Adrenal gland (tissue), 19 donors: ENCODE measurements at regions of chr6 and their contacts with region 1.

Region 1: GRCh38 chr6:83615025-83615999 is 93.6 kb downstream of the SNAP91 start:
- DNase-seq: peak in 1 of 7 donors; percentile 9
- H3K4me3 ChIP-seq: no peak overlapping the region
- H3K27ac ChIP-seq: no peak overlapping the region
- H3K4me1 ChIP-seq: no peaks in the 10 kb centered on the region
- H3K27me3 ChIP-seq: peaks cover 6% of the 10 kb centered on the region
- CTCF ChIP-seq: peak; percentile 41 to 63 (median 48)
- POLR2A ChIP-seq: no peak

Region 2: GRCh38 chr6:83019741-83020140 is 595.6 kb before region 1 on chr6:
- intact Hi-C with region 1: no loop called
- DNase-seq: no peak
- H3K4me3 ChIP-seq: no peak overlapping the region
- H3K27ac ChIP-seq: no peak overlapping the region
- H3K4me1 ChIP-seq: no peaks in the 10 kb centered on the region
- H3K27me3 ChIP-seq: no peaks in the 10 kb centered on the region
- CTCF ChIP-seq: no peak
- POLR2A ChIP-seq: no peak

Region 3: DNA sequence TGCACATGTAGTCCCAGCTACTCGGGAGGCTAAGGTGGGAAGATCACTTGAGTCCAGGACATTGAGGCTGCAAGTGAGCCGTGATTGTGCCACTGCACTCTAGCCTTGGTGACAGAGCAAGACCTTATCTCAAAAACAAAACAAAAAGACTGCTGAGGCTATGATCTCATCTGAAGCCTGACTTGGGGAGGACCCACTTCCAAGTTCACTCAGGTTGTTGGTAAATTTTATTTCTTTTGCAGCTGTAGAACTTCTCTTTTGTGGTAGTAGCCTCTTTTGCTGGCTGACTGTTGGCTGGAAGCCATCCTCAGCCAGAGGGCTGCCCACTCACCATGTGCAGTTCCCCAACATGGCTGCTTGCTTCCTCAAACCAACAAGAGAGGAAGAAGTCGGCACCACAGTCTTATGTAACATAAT is 147.7 kb before region 1 on chr6:
- intact Hi-C with region 1: no loop called
- DNase-seq: peak; percentile 27 to 67 (median 52)
- H3K4me3 ChIP-seq: no peak overlapping the region
- H3K27ac ChIP-seq: peak overlapping the region in 2 of 5 donors; percentile 24 to 37
- H3K4me1 ChIP-seq: peaks cover 0 to 3% of the 10 kb centered on the region in 2 donors
- H3K27me3 ChIP-seq: no peaks in the 10 kb centered on the region
- CTCF ChIP-seq: no peak
- POLR2A ChIP-seq: no peak

Region 4: DNA sequence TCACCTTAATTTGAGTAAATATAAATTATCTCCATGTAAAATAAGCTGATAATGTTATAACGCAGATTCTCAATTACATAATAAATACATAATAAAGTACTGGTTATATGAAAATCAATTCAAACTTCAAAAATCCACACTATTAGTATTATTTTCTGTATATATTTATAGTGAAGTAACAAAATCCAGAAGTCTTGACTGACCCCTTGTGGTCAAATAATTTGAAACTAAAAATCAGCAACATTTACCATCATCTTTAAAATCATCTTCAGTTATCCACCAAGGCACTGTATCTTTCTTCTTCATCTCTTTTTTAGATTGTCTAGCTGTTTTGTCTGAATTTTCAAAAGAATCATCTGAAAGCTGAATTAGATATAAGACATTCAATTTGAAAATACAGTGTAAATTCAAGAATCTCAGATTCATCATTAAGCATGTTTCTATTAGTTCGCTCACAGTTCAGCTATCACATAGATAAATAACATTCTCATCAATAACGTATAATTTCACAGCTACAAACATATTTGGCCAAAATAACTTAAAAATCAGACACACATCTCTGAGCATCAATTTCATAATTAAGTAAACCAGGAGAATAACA is 605.6 kb after region 1 on chr6:
- intact Hi-C with region 1: loop called in 1 of 2 experiments (anchors 10 kb)
- DNase-seq: no peak
- H3K4me3 ChIP-seq: no peak overlapping the region
- H3K27ac ChIP-seq: no peak overlapping the region
- H3K4me1 ChIP-seq: no peaks in the 10 kb centered on the region
- H3K27me3 ChIP-seq: no peaks in the 10 kb centered on the region
- CTCF ChIP-seq: peak; percentile 32 to 67 (median 56)
- POLR2A ChIP-seq: no peak